HEK293T (cell line): ENCODE measurements at regions of chr17 and their contacts with region 1.

Region 1: DNA sequence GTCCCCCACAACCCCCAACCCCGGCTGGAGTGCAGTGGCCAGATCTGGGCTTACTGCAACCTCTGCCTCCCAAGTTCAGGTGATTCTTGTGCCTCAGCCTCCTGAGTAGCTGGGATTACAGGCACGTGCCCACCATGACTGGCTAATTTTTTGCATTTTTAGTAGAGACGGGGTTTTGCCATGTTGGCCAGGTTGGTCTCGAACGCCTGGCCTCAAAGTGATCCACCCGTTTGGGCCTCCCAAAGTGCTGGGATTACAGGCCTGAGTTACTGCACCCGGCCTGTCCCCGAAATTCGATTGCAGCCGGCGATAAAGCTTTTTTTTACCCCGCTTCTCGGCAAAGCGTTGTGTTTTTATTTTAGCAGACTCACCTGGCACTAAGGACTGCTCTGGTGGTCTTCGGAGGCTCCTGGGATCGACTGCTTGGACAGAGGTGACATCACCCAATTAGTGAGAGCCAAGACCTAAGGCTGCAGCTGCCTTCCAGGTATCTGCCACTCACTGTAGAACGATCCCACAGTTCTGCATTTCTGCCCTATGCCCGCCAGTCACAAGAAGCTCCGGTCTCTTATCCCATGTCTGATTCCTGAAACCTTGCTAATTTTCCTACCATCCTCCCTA is 82.2 kb upstream of the ARL4D start:
- DNase-seq: no peak

Region 2: GRCh38 chr17:43024407-43025289 is 292.0 kb before region 1 on chr17 and contains the start of gene RND2:
- CTCF ChIA-PET with region 1: no interaction called
- POLR2A ChIA-PET with region 1: interaction called, 21 read pairs
- DNase-seq: peak; percentile 81

Region 3: DNA sequence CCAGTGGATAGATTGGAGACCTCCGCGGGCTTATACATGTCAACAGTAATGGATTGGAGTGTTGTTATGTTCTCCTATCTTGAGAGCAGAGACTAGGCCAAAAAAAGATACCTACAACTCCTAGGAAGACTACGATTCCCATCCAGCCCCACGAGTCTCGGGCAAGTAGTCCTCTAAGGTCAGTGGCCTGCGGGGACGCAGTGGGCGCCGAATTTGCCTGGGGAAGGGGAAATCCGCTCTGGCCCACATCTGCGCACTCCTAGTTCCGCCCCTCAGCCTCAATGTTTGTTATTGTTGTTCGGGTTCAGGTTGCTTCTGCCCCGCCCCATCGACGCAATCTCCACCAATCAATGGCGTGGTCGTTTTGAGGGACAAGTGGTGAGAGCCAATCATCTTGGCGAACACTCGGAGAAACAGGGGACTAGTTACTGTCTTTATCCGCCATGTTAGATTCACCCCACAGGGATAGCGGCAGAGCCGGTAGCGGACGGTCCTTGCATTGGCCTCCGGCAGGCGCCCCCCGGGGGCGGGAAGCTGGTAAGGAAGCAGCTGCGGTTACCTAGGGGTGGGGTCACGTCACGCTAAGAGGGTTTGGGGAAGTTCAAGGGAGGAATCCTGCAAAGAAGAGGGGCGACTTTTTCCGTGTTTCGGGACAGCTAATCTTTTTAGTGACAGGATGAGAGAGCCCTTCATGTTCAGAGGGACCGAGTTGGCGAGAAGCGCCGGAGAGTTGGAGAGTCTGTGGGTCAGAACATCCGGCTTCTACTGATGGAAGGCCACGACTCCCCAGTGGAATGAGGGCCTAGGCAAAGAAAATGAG is 145.7 kb before region 1 on chr17 and contains the start of gene NBR1:
- CTCF ChIA-PET with region 1: interaction called, 3 read pairs
- POLR2A ChIA-PET with region 1: interaction called, 49 read pairs
- DNase-seq: peak; percentile 93

Region 4: DNA sequence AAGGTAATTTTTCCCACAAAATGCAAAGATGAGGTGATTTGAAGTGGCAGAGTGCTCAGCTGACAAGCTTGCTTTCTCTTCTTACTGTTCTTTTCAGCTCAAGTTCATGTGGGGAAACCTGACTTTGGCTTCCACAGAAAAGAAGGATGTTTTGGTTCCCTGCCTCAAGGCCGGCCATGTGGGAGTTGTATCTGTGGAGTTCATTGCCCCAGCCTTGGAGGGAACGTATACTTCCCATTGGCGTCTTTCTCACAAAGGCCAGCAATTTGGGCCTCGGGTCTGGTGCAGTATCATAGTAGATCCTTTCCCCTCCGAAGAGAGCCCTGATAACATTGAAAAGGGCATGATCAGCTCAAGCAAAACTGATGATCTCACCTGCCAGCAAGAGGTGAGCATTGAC is 123.4 kb before region 1 on chr17:
- CTCF ChIA-PET with region 1: no interaction called
- POLR2A ChIA-PET with region 1: interaction called, 10 read pairs
- DNase-seq: no peak

Region 5: DNA sequence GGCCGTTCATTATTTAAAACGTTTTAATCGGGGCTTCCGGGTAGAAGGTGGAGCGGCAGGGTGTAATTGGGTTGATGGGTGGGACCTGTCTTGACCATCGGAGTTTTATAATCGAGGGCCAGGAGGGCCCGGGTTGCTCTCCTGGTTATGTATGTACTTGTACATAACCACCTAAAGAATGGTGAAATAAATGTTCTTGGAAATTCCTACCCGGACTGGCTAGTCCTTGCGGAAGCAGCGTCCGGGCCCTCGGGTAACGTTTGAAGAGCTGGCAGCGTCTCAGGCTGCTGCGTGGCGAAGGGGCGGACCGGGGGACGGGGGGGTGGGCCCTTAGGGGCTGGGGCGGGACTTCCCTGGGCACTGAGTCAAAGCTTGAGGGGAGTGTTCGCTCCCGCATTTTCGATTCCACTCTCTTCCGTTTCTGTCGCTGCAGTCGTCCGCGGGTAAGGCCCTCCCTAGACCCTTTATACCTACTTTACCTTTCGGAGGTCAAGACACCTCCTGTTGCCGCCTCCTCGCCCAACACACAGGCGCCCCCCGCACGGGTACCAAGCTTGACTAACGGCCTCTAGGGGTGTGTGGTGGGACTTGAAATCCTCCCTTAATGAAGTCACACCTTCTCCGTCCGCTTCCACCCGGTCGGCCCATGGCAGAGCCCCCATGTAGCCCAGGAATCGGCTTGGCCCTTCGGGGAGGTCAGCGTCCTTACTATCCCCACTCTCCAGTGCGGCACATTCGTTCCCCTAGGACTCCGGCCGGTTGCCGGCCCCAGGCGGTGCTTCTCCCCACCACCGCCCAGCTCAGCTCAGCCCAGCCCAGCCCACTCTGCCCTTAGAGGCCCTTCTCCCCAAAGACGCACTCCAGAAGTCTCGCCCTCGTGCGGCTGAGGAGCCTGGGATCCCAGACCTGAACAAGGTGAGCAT is 104.9 kb before region 1 on chr17 and contains the start of gene TMEM106A:
- CTCF ChIA-PET with region 1: no interaction called
- POLR2A ChIA-PET with region 1: interaction called, 47 read pairs
- DNase-seq: no peak

Region 6: DNA sequence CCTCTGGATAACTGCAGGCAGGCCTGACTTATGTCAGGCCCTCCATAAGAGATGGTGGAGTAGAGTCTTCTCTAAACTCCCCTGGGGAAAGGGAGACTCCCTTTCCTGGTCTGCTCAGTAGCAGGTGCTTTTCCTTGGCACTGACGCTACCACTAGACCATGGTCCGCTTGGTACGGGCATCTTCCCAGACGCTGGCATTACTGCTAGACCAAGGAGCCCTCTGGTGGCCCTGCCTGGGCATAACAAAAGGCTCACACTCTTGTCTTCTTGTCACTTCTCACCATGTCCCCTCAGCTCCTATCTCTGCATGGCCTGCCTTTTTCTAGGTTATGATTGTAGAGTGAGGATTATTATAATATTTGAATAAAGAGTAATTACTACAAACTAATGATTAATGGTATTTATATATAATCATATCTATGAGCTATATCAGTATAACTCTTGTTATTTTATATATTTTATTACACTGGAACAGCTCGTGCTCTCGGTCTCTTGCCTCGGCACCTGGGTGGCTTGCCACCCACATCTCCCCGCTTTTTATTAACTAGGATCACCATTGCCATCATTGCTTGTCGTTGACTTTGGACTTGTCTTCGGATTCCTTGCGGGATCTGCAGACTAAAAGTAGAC is 22.4 kb after region 1 on chr17:
- CTCF ChIA-PET with region 1: no interaction called
- POLR2A ChIA-PET with region 1: interaction called, 12 read pairs
- DNase-seq: no peak

Region 7: GRCh38 chr17:43388359-43389045 is 71.9 kb after region 1 on chr17:
- CTCF ChIA-PET with region 1: no interaction called
- POLR2A ChIA-PET with region 1: interaction called, 23 read pairs
- DNase-seq: peak; percentile 82

Region 8: DNA sequence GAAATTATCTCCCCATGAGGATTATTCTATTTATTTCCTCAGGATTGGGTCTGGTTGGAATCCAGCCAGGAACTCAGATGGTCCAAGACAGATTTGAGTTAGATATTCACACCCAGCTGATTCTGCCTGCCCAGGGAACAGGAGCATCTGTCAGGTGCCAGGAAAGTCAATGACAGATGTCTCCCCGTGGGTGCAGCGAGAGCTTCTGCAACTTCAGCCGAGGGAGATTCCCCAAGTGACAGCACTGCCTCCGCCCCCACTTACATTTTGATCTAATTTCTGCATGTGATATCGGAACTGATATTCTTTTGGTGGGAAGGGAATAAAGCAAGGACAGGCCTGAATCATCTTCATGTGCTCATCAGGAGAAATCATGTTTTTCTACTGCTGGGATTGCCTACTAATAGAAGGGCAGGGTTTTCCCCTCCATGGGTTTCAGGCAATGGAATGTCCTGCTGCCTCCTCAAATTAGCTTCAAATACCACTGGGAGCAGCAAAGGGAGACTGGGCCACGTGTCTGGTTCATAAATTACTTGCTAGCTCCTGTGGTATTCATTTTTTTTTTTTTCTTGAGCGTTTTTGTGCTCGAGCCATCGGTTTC is 151.4 kb after region 1 on chr17:
- CTCF ChIA-PET with region 1: no interaction called
- POLR2A ChIA-PET with region 1: no interaction called
- DNase-seq: no peak